ENCODE measurements at regions of chr2 and their contacts with region 1.

Region 1: DNA sequence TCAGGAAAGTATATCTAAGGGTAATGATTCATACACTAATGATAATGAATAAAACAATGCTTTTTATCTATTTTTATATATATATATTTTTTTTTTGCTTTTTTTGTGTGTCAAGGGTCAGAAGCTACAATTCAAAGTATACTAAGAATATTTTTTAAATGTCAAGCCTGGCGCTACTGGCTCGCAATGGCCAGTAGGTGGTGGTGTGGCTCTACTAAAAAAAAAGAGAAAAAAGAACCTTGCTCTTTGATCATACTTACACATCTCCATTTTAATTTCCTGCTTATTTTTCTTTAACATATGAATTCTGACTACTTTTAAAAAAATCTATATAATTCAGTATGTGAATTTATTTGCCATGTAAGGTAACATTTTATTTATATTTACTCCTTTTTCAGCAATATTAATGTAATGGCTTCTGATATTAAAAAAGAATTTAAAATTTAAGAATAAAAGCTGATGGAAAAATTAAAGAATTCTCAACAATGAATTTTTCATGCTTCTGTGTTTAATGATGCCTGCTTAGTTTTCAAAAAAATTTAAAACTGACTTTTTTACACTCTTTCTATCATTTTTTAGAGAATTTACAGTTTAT is 232.9 kb downstream of the GULP1 start:
- DNase-seq: peak; percentile 28
- H3K4me3 ChIP-seq: no peak overlapping the region
- H3K27ac ChIP-seq: peak overlapping the region; percentile 46 to 71
- H3K4me1 ChIP-seq: peaks cover 21 to 28% of the 10 kb centered on the region in 2 experiments; a peak in 2 of 4 replicates
- H3K27me3 ChIP-seq: no peaks in the 10 kb centered on the region
- CTCF ChIP-seq: peak; percentile 82
- EP300 ChIP-seq: no peak
- RAD21 ChIP-seq: peak; percentile 84

Region 2: DNA sequence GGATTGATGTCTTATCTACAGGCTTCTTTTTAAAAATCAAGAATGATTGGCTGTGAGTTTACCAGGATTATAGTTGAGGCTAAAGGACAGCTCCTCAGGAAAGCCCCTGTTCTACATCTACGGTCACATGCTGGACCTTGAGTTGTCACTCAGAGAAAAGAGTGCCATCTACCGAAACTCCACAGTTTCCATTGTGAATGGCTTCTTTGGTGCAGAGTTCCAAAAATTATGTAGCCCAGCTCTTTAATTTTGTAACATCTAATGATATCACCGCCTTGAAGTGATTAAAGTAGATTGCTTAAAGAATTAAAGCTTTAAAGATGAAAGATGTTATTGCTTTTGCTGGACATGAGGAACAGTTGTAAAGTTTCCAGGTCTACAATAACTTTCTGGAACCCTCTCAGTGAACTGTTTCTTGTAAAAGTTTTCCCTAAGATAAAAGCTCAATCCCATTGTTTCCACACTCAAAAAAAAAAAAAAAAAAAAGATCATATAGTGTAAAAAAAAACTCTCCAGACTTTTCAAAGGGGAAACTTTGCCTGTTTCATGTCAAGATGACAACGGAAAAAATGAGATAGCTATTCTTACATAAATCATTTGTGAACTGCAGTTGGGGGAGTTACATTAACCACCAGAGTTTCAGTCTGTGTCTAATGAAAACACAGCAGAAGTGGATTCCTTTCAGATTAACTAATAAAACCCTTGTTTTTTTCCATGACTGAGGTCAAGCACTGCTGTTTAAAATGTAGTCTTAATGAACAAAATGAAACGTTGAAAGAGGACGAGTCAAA is 453.9 kb after region 1 on chr2:
- CTCF ChIA-PET with region 1: interaction called, 38 read pairs
- POLR2A ChIA-PET with region 1: no interaction called
- DNase-seq: no peak
- H3K4me3 ChIP-seq: peak overlapping the region; percentile 60 to 74; a peak in 3 of 4 replicates
- H3K27ac ChIP-seq: peak overlapping the region; percentile 99 to 100
- H3K4me1 ChIP-seq: peaks cover 6 to 24% of the 10 kb centered on the region in 2 experiments
- H3K27me3 ChIP-seq: no peaks in the 10 kb centered on the region
- CTCF ChIP-seq: peak; percentile 62
- EP300 ChIP-seq: peak; percentile 93 to 99
- RAD21 ChIP-seq: peak; percentile 66

Region 3: GRCh38 chr2:188983427-188984064 is 458.9 kb after region 1 on chr2:
- CTCF ChIA-PET with region 1: interaction called, 38 read pairs
- POLR2A ChIA-PET with region 1: no interaction called
- DNase-seq: no peak
- H3K4me3 ChIP-seq: no peak overlapping the region; a peak in 1 of 4 replicates
- H3K27ac ChIP-seq: peak overlapping the region; percentile 99 to 100
- H3K4me1 ChIP-seq: peaks cover 17 to 51% of the 10 kb centered on the region in 2 experiments
- H3K27me3 ChIP-seq: no peaks in the 10 kb centered on the region
- CTCF ChIP-seq: peak; percentile 64
- EP300 ChIP-seq: peak in 1 of 2 experiments; percentile 64; a peak in 2 of 4 replicates
- RAD21 ChIP-seq: no peak

Region 4: GRCh38 chr2:189191766-189192165 is 667.1 kb after region 1 on chr2:
- CTCF ChIA-PET with region 1: no interaction called
- POLR2A ChIA-PET with region 1: no interaction called
- DNase-seq: no peak
- H3K4me3 ChIP-seq: no peak overlapping the region
- H3K27ac ChIP-seq: peak overlapping the region in 1 of 2 experiments; percentile 39; a peak in 1 of 4 replicates
- H3K4me1 ChIP-seq: no peaks in the 10 kb centered on the region; a peak in 1 of 4 replicates
- H3K27me3 ChIP-seq: no peaks in the 10 kb centered on the region
- CTCF ChIP-seq: no peak
- EP300 ChIP-seq: no peak
- RAD21 ChIP-seq: no peak